ENCODE measurements at regions of chr14 and their contacts with region 1.

Region 1: DNA sequence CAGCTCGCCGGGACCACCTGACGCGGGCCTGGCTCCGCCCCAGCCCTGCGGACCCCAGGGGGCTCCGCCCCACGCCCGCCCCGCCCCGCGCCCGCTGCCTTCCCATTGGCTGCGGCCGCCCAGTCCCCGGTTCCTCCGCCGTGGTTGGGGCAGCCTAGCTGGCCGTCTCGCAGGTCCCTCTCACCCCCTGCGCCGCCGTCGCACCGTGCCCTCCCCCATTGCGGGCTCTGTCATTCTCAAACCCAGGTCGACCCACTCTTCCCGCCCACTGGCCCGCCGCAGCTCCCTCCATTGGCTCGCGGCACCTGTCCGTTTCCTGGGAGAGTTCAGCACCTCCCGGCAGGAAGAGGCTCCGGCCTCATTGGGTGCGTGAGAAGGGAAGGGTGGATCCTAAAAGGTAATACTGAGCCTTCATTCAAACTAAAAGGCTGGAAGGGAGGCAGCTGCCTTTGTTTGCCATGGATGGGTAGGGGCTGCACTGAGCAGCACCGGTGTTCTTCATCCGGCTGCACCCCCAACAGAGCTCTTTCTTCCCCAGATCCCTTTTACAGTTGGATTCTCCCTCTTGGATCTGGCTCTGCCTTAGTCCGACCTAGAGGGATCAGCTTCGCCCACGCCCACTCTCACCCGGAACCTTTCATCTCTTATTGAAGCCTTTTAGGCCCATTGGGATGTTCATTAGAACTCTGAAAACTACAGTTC is 381 bp upstream of the MAP3K9 start:
- DNase-seq: peak; percentile 89
- ATAC-seq: peak; percentile 93
- H3K4me3 ChIP-seq: peak overlapping the region; percentile 90
- H3K27ac ChIP-seq: peak overlapping the region; percentile 60
- H3K4me1 ChIP-seq: peaks cover 23% of the 10 kb centered on the region
- H3K27me3 ChIP-seq: no peaks in the 10 kb centered on the region
- CTCF ChIP-seq: no peak
- EP300 ChIP-seq: no peak
- POLR2A ChIP-seq: peak; percentile 52; the same call in 1 of the 2 replicates
- RAD21 ChIP-seq: no peak

Region 2: GRCh38 chr14:70045844-70046535 is 763.7 kb before region 1 on chr14:
- CTCF ChIA-PET with region 1: no interaction called
- POLR2A ChIA-PET with region 1: no interaction called
- RAD21 ChIA-PET with region 1: no interaction called
- SMC1A ChIA-PET with region 1: no interaction called
- in situ Hi-C with region 1: no loop called
- intact Hi-C with region 1: loop called (anchors 10 kb)
- DNase-seq: no peak
- ATAC-seq: peak; percentile 85
- H3K4me3 ChIP-seq: no peak overlapping the region
- H3K27ac ChIP-seq: no peak overlapping the region
- H3K4me1 ChIP-seq: no peaks in the 10 kb centered on the region
- H3K27me3 ChIP-seq: no peaks in the 10 kb centered on the region
- CTCF ChIP-seq: peak; percentile 35 to 63 (median 40); a peak in 4 of 6 replicates
- EP300 ChIP-seq: no peak
- POLR2A ChIP-seq: no peak
- RAD21 ChIP-seq: peak; percentile 37

Region 3: DNA sequence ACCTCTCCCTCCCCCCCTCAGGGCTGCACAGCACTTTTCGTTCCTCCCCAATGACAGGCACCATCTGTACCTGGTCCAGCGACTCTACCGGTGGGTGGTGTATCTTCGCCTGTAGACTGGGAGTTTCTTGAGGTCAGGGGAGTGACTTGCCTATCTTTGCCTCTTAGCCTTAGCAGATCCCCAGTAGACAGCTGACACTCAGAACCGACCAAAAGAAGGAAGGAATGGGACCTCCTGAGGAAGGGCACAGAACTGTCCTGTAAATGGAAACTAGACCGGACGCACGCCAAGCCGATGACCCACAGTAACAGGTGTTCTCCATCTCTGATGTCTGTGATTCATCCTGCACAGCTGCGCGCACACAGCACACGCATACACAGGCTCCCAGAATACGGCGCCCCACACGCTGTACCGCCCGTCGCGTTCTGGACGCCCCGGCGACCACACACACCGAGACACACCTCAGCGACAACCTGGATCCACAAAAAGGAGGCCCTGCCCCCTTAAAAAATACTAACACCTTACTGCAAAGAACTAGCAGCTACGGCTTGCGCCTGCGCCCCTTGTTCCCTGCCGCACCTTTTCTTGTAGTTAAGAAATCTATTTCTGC is 168.7 kb before region 1 on chr14:
- CTCF ChIA-PET with region 1: no interaction called
- POLR2A ChIA-PET with region 1: no interaction called
- RAD21 ChIA-PET with region 1: no interaction called
- SMC1A ChIA-PET with region 1: no interaction called
- in situ Hi-C with region 1: no loop called
- intact Hi-C with region 1: loop called (anchors 5 kb)
- DNase-seq: peak; percentile 60
- ATAC-seq: peak; percentile 77
- H3K4me3 ChIP-seq: peak overlapping the region; percentile 90
- H3K27ac ChIP-seq: peak overlapping the region; percentile 88
- H3K4me1 ChIP-seq: no peaks in the 10 kb centered on the region
- H3K27me3 ChIP-seq: no peaks in the 10 kb centered on the region
- CTCF ChIP-seq: peak in 2 of 3 experiments; percentile 10 to 14; a peak in 2 of 6 replicates
- EP300 ChIP-seq: 0 out of 4 replicates have a peak, but pooled peaks of 1 of the 2 experiments have one; percentile 32
- POLR2A ChIP-seq: peak; percentile 76
- RAD21 ChIP-seq: no peak

Region 4: GRCh38 chr14:70655110-70655826 is 154.4 kb before region 1 on chr14:
- CTCF ChIA-PET with region 1: interaction called, 3 read pairs
- POLR2A ChIA-PET with region 1: interaction called, 10 read pairs
- RAD21 ChIA-PET with region 1: interaction called, 3 read pairs
- SMC1A ChIA-PET with region 1: interaction called, 4 read pairs
- in situ Hi-C with region 1: no loop called
- intact Hi-C with region 1: no loop called
- DNase-seq: peak; percentile 88
- ATAC-seq: peak; percentile 87
- H3K4me3 ChIP-seq: peak overlapping the region; percentile 61
- H3K27ac ChIP-seq: peak overlapping the region; percentile 99
- H3K4me1 ChIP-seq: peaks cover 73% of the 10 kb centered on the region
- H3K27me3 ChIP-seq: no peaks in the 10 kb centered on the region
- CTCF ChIP-seq: no peak
- EP300 ChIP-seq: peak in 1 of 2 experiments; percentile 21; a peak in 1 of 4 replicates
- POLR2A ChIP-seq: 0 out of 2 replicates have a peak, but pooled peaks have one; percentile 35
- RAD21 ChIP-seq: no peak

Region 5: DNA sequence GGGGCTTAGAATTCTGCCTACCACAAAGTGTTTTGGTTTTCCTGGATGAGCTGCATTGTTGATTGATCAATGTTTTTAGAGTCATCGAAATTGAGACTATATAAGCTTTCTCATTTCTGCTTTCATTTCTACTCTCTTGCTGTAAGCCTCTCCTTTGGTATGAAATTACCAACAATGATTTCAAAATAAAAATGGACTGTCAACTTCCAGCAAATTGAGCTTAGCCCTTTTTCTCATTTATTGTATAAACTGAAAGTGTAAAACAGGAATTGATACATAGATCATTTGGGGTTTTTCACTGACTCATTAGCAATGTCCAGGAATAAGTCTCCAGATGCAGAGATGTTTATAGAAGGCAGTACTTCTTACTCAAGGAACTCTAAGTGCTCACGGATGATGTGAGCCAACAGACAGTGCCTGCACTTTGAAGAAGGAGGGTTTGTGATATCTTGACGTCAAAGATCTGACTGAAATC is 77.5 kb after region 1 on chr14:
- CTCF ChIA-PET with region 1: interaction called, 4 read pairs
- POLR2A ChIA-PET with region 1: interaction called, 4 read pairs
- RAD21 ChIA-PET with region 1: interaction called, 15 read pairs
- SMC1A ChIA-PET with region 1: no interaction called
- in situ Hi-C with region 1: no loop called
- intact Hi-C with region 1: no loop called
- DNase-seq: peak; percentile 71
- ATAC-seq: peak; percentile 72
- H3K4me3 ChIP-seq: peak overlapping the region; percentile 56
- H3K27ac ChIP-seq: peak overlapping the region; percentile 98
- H3K4me1 ChIP-seq: peaks cover 65% of the 10 kb centered on the region
- H3K27me3 ChIP-seq: no peaks in the 10 kb centered on the region
- CTCF ChIP-seq: no peak
- EP300 ChIP-seq: peak in 1 of 2 experiments; percentile 54; a peak in 1 of 4 replicates
- POLR2A ChIP-seq: no peak
- RAD21 ChIP-seq: no peak

Region 6: GRCh38 chr14:70972107-70972976 is 162.6 kb after region 1 on chr14:
- CTCF ChIA-PET with region 1: interaction called, 3 read pairs
- POLR2A ChIA-PET with region 1: no interaction called
- RAD21 ChIA-PET with region 1: interaction called, 7 read pairs
- SMC1A ChIA-PET with region 1: interaction called, 3 read pairs
- in situ Hi-C with region 1: loop called (anchors 5 kb)
- intact Hi-C with region 1: no loop called
- DNase-seq: peak; percentile 44
- ATAC-seq: peak; percentile 94
- H3K4me3 ChIP-seq: no peak overlapping the region
- H3K27ac ChIP-seq: no peak overlapping the region
- H3K4me1 ChIP-seq: no peaks in the 10 kb centered on the region
- H3K27me3 ChIP-seq: no peaks in the 10 kb centered on the region
- CTCF ChIP-seq: peak; percentile 79 to 91 (median 83)
- EP300 ChIP-seq: no peak
- POLR2A ChIP-seq: no peak
- RAD21 ChIP-seq: peak; percentile 92

Region 7: DNA sequence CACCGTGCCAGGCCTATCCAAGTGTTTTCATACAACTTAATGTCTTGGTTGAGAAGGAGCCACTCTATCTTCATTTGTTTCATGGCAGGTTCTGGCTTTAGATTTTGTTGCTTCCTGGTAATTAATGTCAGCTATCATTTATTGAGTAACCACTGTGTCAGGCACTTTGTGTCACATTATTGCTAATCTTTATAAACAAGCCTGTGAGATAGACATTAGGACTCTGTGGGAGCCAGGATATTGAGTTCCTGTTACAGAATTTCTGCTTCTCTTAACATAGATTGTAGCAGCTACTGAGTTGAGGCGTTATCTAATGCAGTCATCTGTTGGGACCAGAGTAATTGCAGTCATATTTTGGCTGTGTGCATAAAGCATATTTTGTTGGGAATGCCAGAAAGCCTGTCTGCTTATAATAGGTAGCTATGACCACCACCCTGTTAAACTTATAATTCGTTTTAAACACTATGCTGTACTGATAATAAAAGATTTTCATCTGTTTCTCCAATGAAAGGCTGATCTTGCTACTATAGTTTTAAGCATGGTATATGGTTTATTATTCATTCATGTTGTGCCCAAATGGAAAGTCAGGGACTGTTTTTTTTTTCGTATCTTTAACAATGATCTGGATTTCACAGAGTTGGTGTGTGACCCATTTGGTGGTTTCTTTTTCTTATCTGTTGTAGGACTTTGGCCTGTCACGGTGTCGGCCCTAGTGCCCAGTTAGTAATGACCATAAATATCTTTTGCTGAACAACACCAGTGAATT is 530.1 kb after region 1 on chr14:
- CTCF ChIA-PET with region 1: no interaction called
- POLR2A ChIA-PET with region 1: no interaction called
- RAD21 ChIA-PET with region 1: no interaction called
- SMC1A ChIA-PET with region 1: no interaction called
- in situ Hi-C with region 1: no loop called
- intact Hi-C with region 1: no loop called
- DNase-seq: no peak
- ATAC-seq: no peak
- H3K4me3 ChIP-seq: no peak overlapping the region
- H3K27ac ChIP-seq: no peak overlapping the region
- H3K4me1 ChIP-seq: no peaks in the 10 kb centered on the region
- H3K27me3 ChIP-seq: no peaks in the 10 kb centered on the region
- CTCF ChIP-seq: no peak
- EP300 ChIP-seq: no peak
- POLR2A ChIP-seq: no peak
- RAD21 ChIP-seq: no peak

Measured in GM12878 (cell line).